ENCODE measurements at regions of chr2 and their contacts with region 1.

Region 1: GRCh38 chr2:102442967-102443828 is 20.2 kb downstream of the IL18RAP start:
- DNase-seq: peak in 20 of 42 donors; percentile 7 to 51 (median 28)

Region 2: DNA sequence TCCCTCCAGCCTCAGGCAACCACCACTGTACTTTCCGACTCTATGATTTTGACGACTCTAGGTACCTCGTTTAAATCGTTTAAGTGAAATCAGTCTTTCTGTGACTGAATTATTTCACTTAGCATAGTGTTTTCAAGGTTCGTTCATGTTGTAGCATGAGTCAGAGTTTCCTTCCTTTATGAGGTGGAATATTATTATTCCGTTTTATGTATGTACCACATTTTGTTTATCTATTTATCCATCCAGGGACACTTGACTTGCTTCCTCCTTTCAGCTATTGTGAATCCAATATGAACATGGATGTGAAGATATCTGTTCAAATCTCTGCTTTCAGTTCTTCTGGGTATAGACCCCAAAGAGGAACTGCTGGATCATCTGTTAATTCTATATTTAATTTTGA is 432.3 kb before region 1 on chr2:
- intact Hi-C with region 1: loop called (anchors 10 kb)
- DNase-seq: no peak

Region 3: DNA sequence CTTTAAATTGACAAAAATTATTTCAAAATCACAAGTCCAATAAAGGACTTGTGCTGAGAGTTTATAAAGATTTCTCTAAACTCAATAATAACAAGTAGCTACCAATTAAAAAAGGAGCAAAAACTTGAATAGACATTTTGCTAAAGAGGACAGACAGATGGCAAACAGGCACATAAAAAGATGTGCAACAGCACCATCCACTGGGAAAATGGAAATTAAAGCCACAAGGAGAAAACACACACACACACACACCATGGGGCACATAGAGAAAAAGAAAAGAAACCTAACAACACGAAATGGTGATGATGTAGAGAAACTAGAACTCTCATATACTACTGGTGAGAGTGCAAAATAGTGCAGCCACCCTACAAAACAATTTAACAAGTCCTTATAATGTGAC is 17.3 kb after region 1 on chr2:
- intact Hi-C with region 1: no loop called
- DNase-seq: no peak

Measured in head of caudate nucleus (tissue), 42 donors.